ENCODE measurements at regions of chr17 and their contacts with region 1.

Region 1: GRCh38 chr17:41777574-41778188 is 8.8 kb downstream of the JUP start:
- DNase-seq: peak; percentile 77
- ATAC-seq: peak; percentile 61
- H3K4me3 ChIP-seq: peak overlapping the region; percentile 24 to 60 (median 42)
- H3K27ac ChIP-seq: peak overlapping the region; percentile 75
- H3K4me1 ChIP-seq: peaks cover 60% of the 10 kb centered on the region
- H3K27me3 ChIP-seq: no peaks in the 10 kb centered on the region
- CTCF ChIP-seq: no peak
- EP300 ChIP-seq: peak in 1 of 2 experiments; percentile 55; a peak in 1 of 4 replicates
- POLR2A ChIP-seq: no peak
- RAD21 ChIP-seq: no peak

Region 2: DNA sequence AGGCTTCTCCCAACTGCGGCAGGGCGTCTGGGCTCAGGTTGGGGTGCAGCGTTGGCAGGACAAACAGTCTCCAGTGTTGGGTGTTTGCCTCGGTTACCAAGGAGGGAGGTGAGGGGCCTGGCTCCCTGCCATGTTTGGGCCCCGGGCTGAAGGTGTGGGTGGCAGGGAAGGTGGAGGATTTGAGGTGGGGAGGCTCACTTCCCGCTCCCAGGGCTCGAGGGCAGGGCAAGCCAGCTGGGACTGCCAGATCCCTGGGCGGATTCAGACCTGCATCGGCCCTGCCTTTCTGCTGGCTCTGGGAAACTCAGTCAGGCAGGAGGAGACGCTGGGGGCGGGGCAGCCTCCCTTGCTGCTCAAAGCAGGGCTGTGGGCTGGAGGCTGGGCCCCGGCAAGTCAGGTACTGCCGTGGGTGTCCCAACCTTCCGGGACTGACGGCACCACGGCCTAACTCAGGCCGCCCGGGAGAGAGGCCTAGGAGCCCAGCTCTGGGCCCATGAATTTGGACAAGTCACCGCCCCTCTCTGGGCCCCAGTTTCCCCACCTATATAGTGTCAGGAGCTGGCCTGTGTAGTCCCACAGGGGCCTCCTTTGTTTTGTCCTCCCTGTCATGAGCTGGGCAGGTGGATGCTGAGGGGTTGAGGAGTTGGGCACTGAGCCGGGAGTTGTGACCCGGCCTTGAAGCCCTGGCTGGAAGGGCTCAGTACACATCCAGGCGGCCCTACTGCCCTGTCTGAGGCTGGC is 121.9 kb before region 1 on chr17:
- CTCF ChIA-PET with region 1: no interaction called
- POLR2A ChIA-PET with region 1: no interaction called
- in situ Hi-C with region 1: no loop called
- intact Hi-C with region 1: no loop called
- DNase-seq: no peak
- ATAC-seq: peak; percentile 14
- H3K4me3 ChIP-seq: no peak overlapping the region
- H3K27ac ChIP-seq: no peak overlapping the region
- H3K4me1 ChIP-seq: 0 out of 2 replicates have a peak, but pooled peaks cover 6% of the 10 kb centered on the region
- H3K27me3 ChIP-seq: peaks cover 26 to 77% of the 10 kb centered on the region in 2 experiments
- CTCF ChIP-seq: no peak
- EP300 ChIP-seq: no peak
- POLR2A ChIP-seq: no peak
- RAD21 ChIP-seq: no peak

Region 3: DNA sequence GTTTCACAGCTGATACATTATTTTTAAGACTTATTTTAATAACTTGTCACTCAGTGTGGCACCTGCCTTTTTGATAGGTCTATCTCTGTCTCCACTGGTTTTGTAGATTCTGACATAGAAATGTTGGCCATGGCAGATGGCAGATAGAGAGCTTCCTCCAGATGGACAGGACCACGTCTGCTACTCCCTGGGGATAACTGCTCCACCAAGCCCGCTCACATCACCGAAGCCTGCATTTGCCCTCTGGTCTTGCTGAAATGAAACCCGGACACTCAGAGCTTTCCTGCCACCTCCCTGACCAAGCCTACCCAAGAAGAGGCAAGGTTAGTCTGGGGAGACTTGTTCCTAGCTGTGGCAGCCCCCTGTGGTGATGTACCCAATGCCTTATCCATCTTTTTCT is 26.8 kb before region 1 on chr17:
- CTCF ChIA-PET with region 1: no interaction called
- POLR2A ChIA-PET with region 1: interaction called, 12 read pairs
- in situ Hi-C with region 1: no loop called
- intact Hi-C with region 1: no loop called
- DNase-seq: no peak
- ATAC-seq: no peak
- H3K4me3 ChIP-seq: no peak overlapping the region
- H3K27ac ChIP-seq: no peak overlapping the region
- H3K4me1 ChIP-seq: peaks cover 40% of the 10 kb centered on the region
- H3K27me3 ChIP-seq: no peaks in the 10 kb centered on the region; a peak in 1 of 5 replicates
- CTCF ChIP-seq: no peak
- EP300 ChIP-seq: no peak
- POLR2A ChIP-seq: no peak
- RAD21 ChIP-seq: no peak

Region 4: DNA sequence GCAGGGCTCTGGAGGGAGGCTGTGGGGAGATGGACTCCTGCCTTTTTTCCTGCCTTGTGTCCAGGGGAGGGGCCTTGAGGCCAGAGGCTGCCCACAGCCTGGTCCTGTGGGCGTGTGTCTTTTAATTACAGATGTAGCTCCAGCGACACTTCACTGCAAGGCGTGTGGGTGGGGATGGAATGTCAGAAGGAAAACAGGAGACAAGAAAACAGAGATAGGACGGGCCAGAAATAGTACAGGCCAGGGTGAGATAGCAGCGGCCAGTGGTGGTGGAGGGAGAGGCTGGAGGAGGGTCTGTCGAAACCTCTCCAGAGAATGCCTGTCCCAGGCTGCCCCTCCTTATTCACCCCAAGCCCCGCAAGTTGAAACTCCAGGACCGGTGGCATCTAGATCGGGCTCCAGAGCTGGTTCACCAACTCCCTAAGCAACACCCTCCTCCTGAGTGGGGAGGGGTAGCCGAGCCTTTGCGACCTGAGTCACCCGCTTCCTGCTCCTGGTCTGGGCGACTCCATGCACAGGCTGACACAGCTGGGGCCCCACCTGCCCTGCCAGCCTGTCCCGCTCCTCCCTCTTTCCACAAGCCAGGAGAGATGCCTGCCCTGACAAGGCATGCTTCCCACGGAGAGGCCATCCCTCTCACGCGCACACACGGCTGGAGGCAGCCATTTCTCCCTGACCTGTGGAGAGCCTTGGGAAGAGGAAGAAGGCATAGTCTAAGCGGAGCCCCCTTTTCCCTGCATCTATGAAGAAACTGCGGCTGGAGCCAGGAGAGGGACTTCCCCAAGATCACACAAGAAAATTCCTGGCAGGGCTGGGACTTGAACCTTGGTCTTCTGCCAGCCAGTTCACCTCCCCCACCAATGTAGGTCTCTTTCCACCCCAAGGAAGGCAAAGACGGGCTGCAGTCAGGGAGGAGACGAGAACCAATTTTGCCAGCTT is 15.4 kb after region 1 on chr17:
- CTCF ChIA-PET with region 1: no interaction called
- POLR2A ChIA-PET with region 1: interaction called, 41 read pairs
- in situ Hi-C with region 1: no loop called
- intact Hi-C with region 1: no loop called
- DNase-seq: peak; percentile 68
- ATAC-seq: peak; percentile 83
- H3K4me3 ChIP-seq: peak overlapping the region; percentile 47 to 66 (median 55)
- H3K27ac ChIP-seq: peak overlapping the region; percentile 53
- H3K4me1 ChIP-seq: peaks cover 54% of the 10 kb centered on the region
- H3K27me3 ChIP-seq: no peaks in the 10 kb centered on the region; a peak in 1 of 5 replicates
- CTCF ChIP-seq: no peak; the same call in 1 of the 2 replicates
- EP300 ChIP-seq: no peak; a peak in 1 of 4 replicates
- POLR2A ChIP-seq: no peak; a peak in 1 of 4 replicates
- RAD21 ChIP-seq: no peak; the same call in 1 of the 2 replicates

Measured in HepG2 (cell line).